Activated naive CD4-positive, alpha-beta T cell treated with anti-CD3 and anti-CD28 coated beads for 36 hours (primary cell): ENCODE measurements at regions of chr14 and their contacts with region 1.

Region 1: GRCh38 chr14:21123429-21123828 is 22.6 kb downstream of the TMEM253 start:
- DNase-seq: no peak
- H3K4me3 Mint-ChIP-seq: no peak overlapping the region
- H3K27ac Mint-ChIP-seq: no peak overlapping the region
- H3K4me1 Mint-ChIP-seq: no peaks in the 10 kb centered on the region
- H3K27me3 Mint-ChIP-seq: peaks cover 2% of the 10 kb centered on the region

Region 2: DNA sequence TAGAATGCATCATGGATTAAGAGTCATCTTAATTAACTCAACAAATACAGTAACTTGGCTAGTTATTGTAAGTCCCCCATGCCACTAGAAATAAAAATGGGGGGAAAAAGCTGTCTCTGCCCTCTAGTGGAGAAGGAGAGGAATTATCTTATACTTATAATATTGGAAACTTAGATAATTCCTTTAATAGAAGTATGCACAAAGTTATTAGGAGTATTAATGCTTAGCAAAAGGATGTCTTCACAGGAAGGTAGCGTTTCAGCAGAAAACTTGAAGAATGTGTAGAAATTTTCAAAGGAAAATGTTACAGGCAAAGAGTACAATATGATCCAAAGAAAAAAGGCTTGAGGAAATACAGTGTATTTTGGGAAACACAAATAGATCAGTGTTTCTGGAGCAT is 12.6 kb after region 1 on chr14:
- CTCF ChIA-PET with region 1: interaction called, 21 read pairs
- intact Hi-C with region 1: no loop called
- DNase-seq: no peak
- H3K4me3 Mint-ChIP-seq: no peak overlapping the region
- H3K27ac Mint-ChIP-seq: no peak overlapping the region
- H3K4me1 Mint-ChIP-seq: no peaks in the 10 kb centered on the region
- H3K27me3 Mint-ChIP-seq: no peaks in the 10 kb centered on the region